ENCODE measurements at regions of chr3 and their contacts with region 1.

Region 1: GRCh38 chr3:124905849-124906248 is 18.7 kb upstream of the ITGB5 start:
- DNase-seq: no peak
- H3K4me3 ChIP-seq: no peak overlapping the region
- H3K27ac ChIP-seq: no peak overlapping the region
- H3K4me1 ChIP-seq: peaks cover 0 to 3% of the 10 kb centered on the region in 2 donors
- H3K27me3 ChIP-seq: no peaks in the 10 kb centered on the region
- CTCF ChIP-seq: no peak
- POLR2A ChIP-seq: no peak

Region 2: DNA sequence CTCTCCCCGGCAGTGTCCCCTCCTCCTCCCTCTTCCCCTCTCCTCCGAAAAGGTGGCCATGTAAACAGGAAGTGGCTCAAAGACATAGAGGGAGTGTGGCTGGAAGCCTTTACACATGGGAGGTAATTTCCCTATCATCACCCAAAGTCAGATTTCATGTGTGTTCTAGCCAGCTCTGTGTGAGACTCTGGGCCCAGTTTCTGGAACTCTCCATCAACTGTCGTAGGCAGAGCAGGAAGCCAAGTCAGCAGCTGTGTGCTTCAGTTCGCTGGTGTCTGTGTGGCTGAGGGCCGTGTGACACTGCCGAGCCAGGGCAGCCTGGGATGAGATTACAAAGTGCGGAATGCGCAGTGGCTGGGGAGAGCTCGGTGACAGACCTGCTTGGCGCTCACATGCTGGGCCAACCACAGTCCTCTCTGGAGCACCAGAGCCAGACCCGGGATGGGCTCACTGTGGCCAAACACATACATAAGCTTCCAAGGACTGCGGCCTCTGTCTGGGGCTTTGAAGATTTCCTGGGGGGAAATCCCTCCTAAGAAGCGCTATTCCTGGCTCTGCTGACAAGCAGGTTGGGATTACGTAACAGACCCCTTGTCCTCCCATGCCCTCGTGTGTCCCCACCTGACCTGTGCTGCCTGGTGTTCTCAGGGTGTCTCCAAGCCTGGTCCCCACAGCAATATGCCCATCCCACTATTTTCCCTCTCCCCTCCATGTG is 124.9 kb before region 1 on chr3:
- intact Hi-C with region 1: loop called in 1 of 2 experiments (anchors 5 kb)
- DNase-seq: peak; percentile 48 to 92 (median 68)
- H3K4me3 ChIP-seq: no peak overlapping the region
- H3K27ac ChIP-seq: peak overlapping the region in 4 of 5 donors; percentile 47 to 73 (median 62)
- H3K4me1 ChIP-seq: peaks cover 15 to 32% of the 10 kb centered on the region in 2 donors
- H3K27me3 ChIP-seq: no peaks in the 10 kb centered on the region
- CTCF ChIP-seq: no peak
- POLR2A ChIP-seq: peak; percentile 23 to 31

Measured in adrenal gland (tissue), 19 donors.